WTC11 (cell line): ENCODE measurements at regions of chr12 and their contacts with region 1.

Region 1: GRCh38 chr12:94101738-94102660 is 46.4 kb upstream of the PLXNC1 start:
- DNase-seq: peak; percentile 88
- ATAC-seq: peak; percentile 81
- H3K4me3 Mint-ChIP-seq: peak overlapping the region; percentile 75
- H3K27ac Mint-ChIP-seq: no peak overlapping the region
- H3K4me1 Mint-ChIP-seq: peaks cover 9% of the 10 kb centered on the region
- H3K27me3 Mint-ChIP-seq: peaks cover 34% of the 10 kb centered on the region
- CTCF ChIP-seq: peak; percentile 58

Region 2: GRCh38 chr12:93403988-93404803 is 697.8 kb before region 1 on chr12:
- CTCF ChIA-PET with region 1: no interaction called
- POLR2A ChIA-PET with region 1: no interaction called
- DNase-seq: no peak
- ATAC-seq: no peak
- H3K4me3 Mint-ChIP-seq: no peak overlapping the region
- H3K27ac Mint-ChIP-seq: peak overlapping the region; percentile 17
- H3K4me1 Mint-ChIP-seq: no peaks in the 10 kb centered on the region; the same call in 1 of the 2 replicates
- H3K27me3 Mint-ChIP-seq: no peaks in the 10 kb centered on the region
- CTCF ChIP-seq: no peak

Region 3: DNA sequence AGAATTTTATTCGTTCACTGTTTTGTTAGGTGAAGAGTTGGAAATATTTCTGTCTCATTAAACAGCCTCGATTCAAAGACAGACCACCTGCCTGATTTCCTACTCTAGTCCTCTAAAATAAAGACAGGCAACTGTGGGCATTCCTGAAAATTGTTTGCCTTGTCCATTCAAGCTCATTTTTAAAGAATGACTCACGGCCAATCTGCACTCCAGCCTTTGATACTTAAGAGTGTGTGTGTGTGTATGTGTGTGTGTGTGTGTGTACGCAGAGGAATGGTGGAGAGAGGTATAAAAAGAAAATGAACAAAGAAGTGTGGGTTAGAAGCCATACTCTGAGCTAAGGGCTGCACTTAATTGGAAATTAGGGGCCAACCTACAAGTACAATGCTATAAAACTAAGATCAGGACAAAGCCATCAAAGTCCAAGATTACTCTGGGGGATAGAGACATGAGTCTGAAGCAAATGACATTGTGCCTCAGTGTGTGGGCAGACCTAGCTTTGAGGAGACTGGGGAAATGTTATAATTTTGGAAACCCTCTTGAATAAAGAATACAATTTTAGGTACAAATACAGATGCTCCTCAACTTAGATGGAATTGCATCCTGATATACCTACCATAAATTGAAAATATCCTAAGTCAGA is 575.1 kb before region 1 on chr12:
- CTCF ChIA-PET with region 1: interaction called, 53 read pairs
- POLR2A ChIA-PET with region 1: interaction called, 7 read pairs
- DNase-seq: no peak
- ATAC-seq: no peak
- H3K4me3 Mint-ChIP-seq: no peak overlapping the region
- H3K27ac Mint-ChIP-seq: no peak overlapping the region
- H3K4me1 Mint-ChIP-seq: peaks cover 10% of the 10 kb centered on the region
- H3K27me3 Mint-ChIP-seq: no peaks in the 10 kb centered on the region
- CTCF ChIP-seq: no peak

Region 4: DNA sequence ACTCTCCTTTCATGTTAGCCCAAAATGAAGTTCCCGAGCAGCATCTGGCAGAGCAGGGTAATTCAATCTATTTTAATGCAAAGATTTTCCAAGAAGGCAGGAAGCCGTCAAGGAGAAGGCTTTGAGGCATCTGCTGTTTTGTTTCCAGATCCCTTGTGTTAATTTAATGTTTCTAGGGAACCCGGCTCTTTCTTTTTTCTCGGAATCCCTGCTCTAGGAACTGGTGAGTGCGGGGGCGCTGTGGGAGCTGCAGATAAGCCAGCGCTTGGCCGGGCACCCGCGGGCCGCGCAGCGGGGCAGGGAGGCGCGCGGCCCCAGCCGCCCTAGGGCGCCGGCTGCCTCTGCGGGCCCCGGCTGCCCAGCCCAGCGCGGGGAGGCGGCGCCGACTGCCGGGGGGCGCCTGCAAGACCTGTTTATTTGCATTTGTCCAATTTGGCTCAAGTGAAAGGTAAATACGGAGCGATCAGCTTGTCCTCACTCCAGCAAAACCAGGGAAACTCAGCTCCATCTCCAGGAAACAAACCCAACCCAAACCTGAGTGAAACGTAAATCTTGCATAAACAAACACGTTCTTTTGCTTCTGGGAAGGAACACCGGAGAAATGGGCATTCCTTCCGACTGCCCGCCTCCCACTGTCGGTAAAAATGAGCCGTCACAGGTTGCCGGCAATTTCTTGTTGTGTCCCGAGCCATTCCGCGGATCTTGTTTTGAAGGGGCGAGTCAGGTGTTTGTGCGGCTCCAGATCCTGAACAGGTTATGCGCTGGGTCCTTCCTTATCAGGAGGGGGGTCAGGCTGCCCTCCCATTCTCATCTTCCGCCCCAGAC is 359.7 kb before region 1 on chr12:
- CTCF ChIA-PET with region 1: interaction called, 19 read pairs
- POLR2A ChIA-PET with region 1: interaction called, 4 read pairs
- DNase-seq: peak; percentile 69
- ATAC-seq: peak; percentile 67
- H3K4me3 Mint-ChIP-seq: peak overlapping the region; percentile 78
- H3K27ac Mint-ChIP-seq: peak overlapping the region; percentile 99
- H3K4me1 Mint-ChIP-seq: peaks cover 61% of the 10 kb centered on the region
- H3K27me3 Mint-ChIP-seq: no peaks in the 10 kb centered on the region
- CTCF ChIP-seq: no peak

Region 5: DNA sequence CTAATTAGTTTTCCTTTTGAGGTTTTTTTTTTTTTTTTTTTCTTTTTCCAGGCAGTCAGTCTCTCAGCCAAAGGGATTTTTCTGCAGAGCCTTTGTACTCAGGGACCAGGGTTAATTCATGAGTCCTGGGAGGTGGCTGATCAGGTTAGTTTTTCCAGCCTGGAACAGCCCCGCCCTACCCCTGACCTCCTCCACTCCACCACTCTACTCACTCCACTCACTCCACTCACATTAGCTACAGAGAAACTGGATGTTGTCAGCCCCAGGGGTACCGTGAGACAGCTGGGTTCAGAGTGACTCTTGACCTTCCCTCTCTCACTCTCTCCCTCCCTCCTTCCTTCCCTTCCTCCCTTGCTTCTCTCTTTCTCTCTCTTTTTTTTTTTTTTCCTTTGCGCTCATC is 263.8 kb before region 1 on chr12:
- CTCF ChIA-PET with region 1: interaction called, 10 read pairs
- POLR2A ChIA-PET with region 1: no interaction called
- DNase-seq: no peak
- ATAC-seq: no peak; the same call in 1 of the 2 replicates
- H3K4me3 Mint-ChIP-seq: no peak overlapping the region
- H3K27ac Mint-ChIP-seq: no peak overlapping the region
- H3K4me1 Mint-ChIP-seq: peaks cover 22% of the 10 kb centered on the region
- H3K27me3 Mint-ChIP-seq: no peaks in the 10 kb centered on the region
- CTCF ChIP-seq: no peak

Region 6: GRCh38 chr12:93990832-93991803 is 110.9 kb before region 1 on chr12:
- CTCF ChIA-PET with region 1: interaction called, 49 read pairs
- POLR2A ChIA-PET with region 1: no interaction called
- DNase-seq: peak; percentile 57
- ATAC-seq: peak; percentile 99
- H3K4me3 Mint-ChIP-seq: no peak overlapping the region
- H3K27ac Mint-ChIP-seq: peak overlapping the region; percentile 8; the same call in 1 of the 2 replicates
- H3K4me1 Mint-ChIP-seq: peaks cover 15% of the 10 kb centered on the region
- H3K27me3 Mint-ChIP-seq: no peaks in the 10 kb centered on the region; the same call in 1 of the 2 replicates
- CTCF ChIP-seq: no peak

Region 7: GRCh38 chr12:94020335-94020734 is 81.7 kb before region 1 on chr12:
- CTCF ChIA-PET with region 1: no interaction called
- POLR2A ChIA-PET with region 1: no interaction called
- DNase-seq: no peak
- ATAC-seq: no peak
- H3K4me3 Mint-ChIP-seq: no peak overlapping the region
- H3K27ac Mint-ChIP-seq: no peak overlapping the region
- H3K4me1 Mint-ChIP-seq: no peaks in the 10 kb centered on the region
- H3K27me3 Mint-ChIP-seq: peaks cover 7% of the 10 kb centered on the region
- CTCF ChIP-seq: no peak

Region 8: DNA sequence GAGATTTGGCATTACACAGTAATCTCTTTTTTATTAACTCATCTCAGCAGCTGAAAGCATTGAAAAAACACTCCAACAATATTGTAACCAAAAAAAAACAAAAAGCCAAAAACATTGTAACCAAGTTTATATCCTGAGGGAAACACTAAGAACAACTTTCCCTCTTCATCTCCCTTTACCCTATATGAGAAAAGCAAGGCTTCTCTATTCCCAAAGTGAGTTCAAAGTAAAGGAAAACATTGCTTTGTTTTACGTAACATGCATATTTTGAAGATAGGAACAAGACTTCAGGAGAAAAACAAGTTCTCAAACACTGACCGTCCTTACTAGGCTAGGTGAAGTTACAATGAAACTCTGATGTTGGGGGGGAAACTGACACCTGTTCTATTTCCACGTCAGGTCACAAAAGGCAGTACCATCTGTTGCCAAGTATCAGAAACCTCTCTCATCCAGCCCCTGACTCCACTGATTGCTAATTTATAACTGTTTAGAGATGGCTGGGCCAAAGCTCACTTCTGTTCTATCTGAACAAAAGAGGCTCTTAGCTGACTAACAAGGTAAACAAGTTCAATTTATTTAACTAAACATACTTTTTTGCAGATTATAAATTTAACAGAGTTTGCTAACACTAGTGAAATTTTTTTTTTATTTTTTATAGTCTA is 21.5 kb before region 1 on chr12:
- CTCF ChIA-PET with region 1: interaction called, 98 read pairs
- POLR2A ChIA-PET with region 1: no interaction called
- DNase-seq: no peak
- ATAC-seq: no peak
- H3K4me3 Mint-ChIP-seq: no peak overlapping the region
- H3K27ac Mint-ChIP-seq: no peak overlapping the region
- H3K4me1 Mint-ChIP-seq: peaks cover 6% of the 10 kb centered on the region
- H3K27me3 Mint-ChIP-seq: no peaks in the 10 kb centered on the region
- CTCF ChIP-seq: no peak

Region 9: GRCh38 chr12:94202245-94203180 is 100.5 kb after region 1 on chr12:
- CTCF ChIA-PET with region 1: no interaction called
- POLR2A ChIA-PET with region 1: no interaction called
- DNase-seq: no peak
- ATAC-seq: no peak
- H3K4me3 Mint-ChIP-seq: no peak overlapping the region
- H3K27ac Mint-ChIP-seq: no peak overlapping the region
- H3K4me1 Mint-ChIP-seq: peaks cover 38% of the 10 kb centered on the region
- H3K27me3 Mint-ChIP-seq: no peaks in the 10 kb centered on the region; the same call in none of the 2 replicates
- CTCF ChIP-seq: no peak

Region 10: DNA sequence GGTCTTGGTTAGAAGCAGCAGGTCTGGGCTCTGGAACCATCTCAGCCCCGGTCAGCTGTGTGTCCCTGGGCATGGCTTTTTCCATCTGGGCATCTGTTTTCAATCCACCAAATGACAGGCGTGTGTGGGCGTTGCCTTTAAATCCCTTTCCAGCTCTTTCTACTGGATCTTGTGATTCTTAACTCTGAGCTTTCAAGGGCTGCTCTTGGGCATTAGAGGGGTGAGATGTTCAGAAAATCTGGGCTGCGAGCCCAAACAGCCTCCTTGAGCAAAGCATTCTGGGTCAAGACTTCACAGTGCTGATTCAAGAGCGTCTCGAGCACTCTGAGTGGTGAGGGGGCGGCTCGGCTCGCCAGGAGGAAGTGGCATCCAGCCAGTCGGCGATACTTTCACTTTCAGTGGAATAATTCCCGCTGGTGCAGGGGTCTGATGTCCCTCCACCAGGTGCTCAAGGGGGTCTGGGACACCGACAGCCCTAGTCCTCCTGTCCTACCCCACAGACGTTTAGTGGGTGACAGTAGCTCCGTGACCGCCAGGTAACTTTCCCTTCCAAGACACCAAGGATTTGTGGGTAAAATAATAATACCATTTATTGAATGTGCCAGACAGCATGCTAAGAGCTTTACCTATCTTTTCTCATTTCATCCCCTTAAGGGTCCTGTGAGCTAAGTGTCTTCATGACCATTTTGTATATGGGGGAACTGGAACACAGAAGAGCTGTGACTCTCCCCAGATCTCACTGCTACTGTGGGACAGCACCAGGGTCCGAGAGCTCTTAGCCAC is 160.4 kb after region 1 on chr12:
- CTCF ChIA-PET with region 1: no interaction called
- POLR2A ChIA-PET with region 1: no interaction called
- DNase-seq: no peak
- ATAC-seq: no peak
- H3K4me3 Mint-ChIP-seq: no peak overlapping the region
- H3K27ac Mint-ChIP-seq: no peak overlapping the region; the same call in 1 of the 2 replicates
- H3K4me1 Mint-ChIP-seq: peaks cover 71% of the 10 kb centered on the region
- H3K27me3 Mint-ChIP-seq: peaks cover 13% of the 10 kb centered on the region
- CTCF ChIP-seq: no peak